Naive thymus-derived CD8-positive, alpha-beta T cell (primary cell): ENCODE measurements at regions of chr1 and their contacts with region 1.

Region 1: DNA sequence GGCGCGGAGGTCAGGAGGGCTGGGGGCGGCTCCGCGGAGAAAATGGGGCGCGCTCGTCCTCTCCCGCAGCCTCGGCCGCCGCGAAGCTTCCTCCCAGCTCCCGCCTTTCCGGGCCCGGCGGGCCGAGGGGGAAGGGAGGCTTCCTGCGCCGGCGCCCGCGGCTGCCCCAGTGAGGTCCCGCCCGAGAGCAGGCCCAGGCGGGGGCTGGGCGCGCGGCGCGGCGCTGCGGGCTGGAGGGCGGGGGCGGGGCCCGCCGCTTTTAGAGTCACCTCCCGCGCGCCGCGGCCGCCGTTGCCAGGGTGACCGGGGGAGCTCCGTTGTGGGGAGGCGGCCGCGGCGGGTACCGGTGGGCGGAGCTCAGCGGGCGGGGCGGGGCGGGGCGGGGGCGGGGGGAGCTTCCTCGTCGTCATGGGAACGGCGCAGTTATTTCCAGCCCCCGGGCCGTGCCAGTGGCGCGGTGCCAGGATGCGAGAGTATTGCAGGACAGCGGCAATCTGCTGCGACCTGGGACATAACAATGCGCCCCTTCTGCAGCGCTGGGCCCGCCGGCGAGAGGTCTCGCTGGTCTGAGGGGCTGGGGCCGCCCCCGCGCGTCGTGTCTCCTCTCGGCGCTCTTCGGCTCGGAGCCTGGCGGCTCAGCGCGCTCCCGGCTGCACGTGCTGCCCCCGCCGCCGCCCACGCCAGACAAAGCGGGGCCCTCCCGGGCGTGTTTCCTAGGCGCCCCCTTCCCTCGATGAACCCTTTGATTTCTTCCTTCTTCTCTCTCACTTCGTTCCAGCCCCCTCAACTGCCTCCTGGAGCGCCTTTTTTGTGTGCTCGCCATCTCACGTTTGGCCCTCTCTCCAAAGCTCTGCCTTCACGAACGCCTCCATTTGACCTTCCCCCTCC is 16.9 kb downstream of the IER5 start:
- DNase-seq: peak; percentile 85 to 97 (median 90)
- ATAC-seq: peak; percentile 77 to 86
- H3K4me3 Mint-ChIP-seq: peak overlapping the region; percentile 80 to 98 (median 89)
- H3K27ac Mint-ChIP-seq: peak overlapping the region; percentile 81 to 98 (median 93)
- H3K4me1 Mint-ChIP-seq: peaks cover 25 to 61% (median 53%) of the 10 kb centered on the region in 4 donors
- H3K27me3 Mint-ChIP-seq: peaks cover 0 to 3% (median 0%) of the 10 kb centered on the region in 5 donors

Region 2: DNA sequence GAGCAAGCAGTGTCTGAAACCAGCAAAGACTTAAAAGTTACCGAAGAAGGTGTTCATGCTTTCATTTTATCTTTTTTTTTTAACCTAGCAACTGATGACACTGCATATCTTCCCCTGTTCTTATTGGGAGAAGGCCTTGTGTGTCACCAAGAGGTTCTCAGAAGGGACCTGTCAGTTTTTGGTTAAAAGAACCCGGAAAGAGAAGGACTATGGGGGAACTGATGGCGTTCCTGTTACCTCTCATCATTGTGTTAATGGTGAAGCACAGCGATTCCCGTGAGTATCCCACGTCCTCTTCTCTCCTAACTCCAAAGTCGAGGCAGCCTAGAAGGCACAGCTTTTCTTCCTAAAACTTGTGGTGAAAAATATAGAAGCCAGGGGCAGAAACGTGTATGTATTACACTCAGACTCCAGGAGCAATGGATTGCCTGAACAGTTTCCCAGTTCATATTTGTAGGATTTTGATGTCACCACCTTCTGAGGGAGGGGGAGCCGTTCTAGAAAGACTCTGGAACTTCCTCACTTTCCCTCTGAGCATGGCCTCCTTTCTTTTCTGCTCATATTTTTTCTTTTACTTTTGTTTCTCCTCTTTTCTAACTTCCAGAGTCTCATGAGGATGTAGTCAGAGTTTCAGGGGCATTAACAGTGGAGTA is 71.5 kb before region 1 on chr1 and contains the start of gene MR1:
- POLR2A ChIA-PET with region 1: interaction called, 11 read pairs
- DNase-seq: peak in 8 of 10 donors; percentile 27 to 91 (median 62)
- ATAC-seq: peak; percentile 98
- H3K4me3 Mint-ChIP-seq: peak within 1 kb of the TSS; percentile 94 to 99 (median 98)
- H3K27ac Mint-ChIP-seq: peak within 1 kb of the TSS; percentile 98 to 100 (median 99)
- H3K4me1 Mint-ChIP-seq: peaks cover 27 to 69% (median 57%) of the 10 kb centered on the region in 4 donors
- H3K27me3 Mint-ChIP-seq: no peaks in the 10 kb centered on the region
- polyA plus RNA-seq, gene MR1: 27.8 to 35.5 (median 33.4) TPM

Region 3: GRCh38 chr1:181117638-181118449 is 12.5 kb after region 1 on chr1:
- POLR2A ChIA-PET with region 1: interaction called, 28 read pairs
- DNase-seq: no peak
- ATAC-seq: no peak
- H3K4me3 Mint-ChIP-seq: no peak overlapping the region
- H3K27ac Mint-ChIP-seq: no peak overlapping the region
- H3K4me1 Mint-ChIP-seq: peaks cover 0 to 21% (median 2%) of the 10 kb centered on the region in 4 donors
- H3K27me3 Mint-ChIP-seq: peaks cover 0 to 3% (median 0%) of the 10 kb centered on the region in 5 donors

Region 4: DNA sequence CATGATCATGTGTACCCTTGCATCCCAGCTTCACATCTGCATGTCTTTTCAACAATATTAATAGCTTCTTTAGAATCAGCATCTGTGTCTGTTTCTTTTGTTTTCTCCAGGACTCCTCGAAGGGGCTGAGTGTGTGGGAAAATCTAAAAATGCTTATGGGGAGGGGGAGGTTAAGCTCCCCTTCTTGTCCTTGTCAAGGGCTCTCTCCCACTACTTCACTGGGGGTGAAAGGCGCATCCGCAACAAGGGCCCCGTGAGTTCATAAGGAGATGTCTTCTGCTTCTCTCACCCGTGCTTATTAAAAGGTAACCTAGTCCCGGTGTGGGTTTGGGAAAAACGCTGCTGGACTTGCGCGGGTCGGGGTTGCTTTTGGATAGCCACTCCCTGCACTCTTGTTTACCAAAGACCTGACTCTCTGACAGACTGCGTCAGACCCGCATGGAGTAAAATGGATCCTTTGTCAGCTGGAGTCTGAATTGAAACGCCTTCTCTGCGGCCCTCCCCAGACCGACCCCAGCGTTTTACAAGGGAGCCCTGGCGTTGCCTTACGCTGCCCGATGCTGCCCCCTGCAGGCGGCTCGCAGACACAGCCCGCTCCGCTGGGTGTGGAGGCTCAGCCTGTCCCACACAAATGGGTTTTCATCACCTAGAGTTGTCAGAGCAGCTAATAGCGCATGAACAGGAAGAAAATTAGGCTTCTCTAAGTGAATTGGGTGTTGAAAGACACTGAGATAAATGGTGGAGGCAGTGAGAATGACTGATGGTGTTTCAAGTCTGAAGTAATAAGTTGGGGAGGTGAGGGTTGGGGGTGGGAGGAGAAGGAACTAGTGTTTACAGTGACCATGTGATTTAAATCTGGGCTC is 36.9 kb after region 1 on chr1:
- POLR2A ChIA-PET with region 1: interaction called, 10 read pairs
- DNase-seq: peak; percentile 73 to 91 (median 86)
- ATAC-seq: peak; percentile 100
- H3K4me3 Mint-ChIP-seq: peak overlapping the region in 3 of 10 donors; percentile 19 to 40 (median 35)
- H3K27ac Mint-ChIP-seq: peak overlapping the region in 4 of 10 donors; percentile 37 to 86 (median 79)
- H3K4me1 Mint-ChIP-seq: peaks cover 17 to 46% (median 32%) of the 10 kb centered on the region in 4 donors
- H3K27me3 Mint-ChIP-seq: peaks cover 0 to 4% (median 0%) of the 10 kb centered on the region in 5 donors